CD4-positive, alpha-beta T cell (primary cell): ENCODE measurements at regions of chr19 and their contacts with region 1.

Region 1: DNA sequence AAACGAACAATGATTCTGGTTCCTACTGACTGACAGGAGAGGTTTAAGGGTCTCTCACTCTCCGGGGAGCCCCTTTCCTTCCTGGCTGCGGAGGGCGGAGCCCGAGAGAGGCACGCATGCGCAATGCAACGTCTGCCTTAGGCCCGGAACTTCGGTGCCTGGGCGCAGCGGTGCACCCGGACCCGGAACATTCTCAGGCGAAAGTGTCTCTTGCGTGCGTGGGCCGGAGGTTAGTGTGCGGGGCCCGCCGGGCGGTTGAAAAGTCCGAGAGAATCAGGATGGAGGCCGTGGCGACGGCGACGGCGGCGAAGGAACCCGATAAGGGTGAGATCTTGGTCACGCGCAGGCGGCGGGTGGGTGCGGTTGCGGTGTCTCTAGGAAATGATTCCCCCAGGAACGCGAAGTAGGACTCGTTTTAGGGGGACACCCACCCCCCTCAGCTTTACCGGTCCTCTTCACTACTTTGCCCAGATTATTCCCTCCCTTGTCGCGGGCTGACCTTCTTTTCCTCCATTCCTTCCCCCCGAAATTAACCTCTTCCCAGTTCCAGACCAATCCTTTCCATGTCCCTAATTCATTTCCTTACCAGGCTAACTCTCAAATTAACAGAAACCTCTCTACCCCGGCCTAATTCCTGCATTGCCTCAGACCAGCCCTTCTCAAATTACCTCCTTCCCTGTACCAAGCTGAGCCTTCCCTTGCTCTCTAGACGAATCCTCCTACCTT is at the start of gene CCDC97:
- DNase-seq: peak; percentile 80 to 94 (median 88)
- ATAC-seq: peak; percentile 55
- H3K4me3 ChIP-seq: peak within 1 kb of the TSS; percentile 64
- H3K4me3 Mint-ChIP-seq: peak within 1 kb of the TSS; percentile 95
- H3K27ac ChIP-seq: peak within 1 kb of the TSS; percentile 95 to 97
- H3K27ac Mint-ChIP-seq: peak within 1 kb of the TSS; percentile 97
- H3K4me1 ChIP-seq: peaks cover 80% of the 10 kb centered on the region
- H3K4me1 Mint-ChIP-seq: peaks cover 80% of the 10 kb centered on the region
- H3K27me3 ChIP-seq: no peaks in the 10 kb centered on the region
- H3K27me3 Mint-ChIP-seq: no peaks in the 10 kb centered on the region
- CTCF ChIP-seq: no peak
- total RNA-seq, gene CCDC97: 27.3 to 29.7 TPM

Region 2: DNA sequence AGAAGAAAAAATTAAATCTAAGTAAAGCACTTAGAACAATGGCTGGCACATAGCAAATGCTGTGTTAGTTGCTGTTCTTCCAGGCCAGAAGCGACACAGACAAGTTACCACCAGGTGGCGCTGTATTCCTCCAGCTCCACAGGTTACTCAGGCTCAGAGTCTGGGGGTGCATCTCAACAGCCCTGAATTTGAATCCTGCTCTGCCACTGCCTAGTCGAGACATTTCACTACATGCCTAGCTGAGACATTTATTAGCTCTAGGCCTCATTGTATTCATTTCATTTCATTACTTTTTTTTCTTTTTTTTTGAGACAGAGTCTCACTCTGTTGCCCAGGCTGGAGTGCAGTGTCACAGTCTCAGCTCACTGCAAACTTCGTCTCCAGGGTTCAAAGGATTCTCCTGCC is 335.6 kb before region 1 on chr19:
- CTCF ChIA-PET with region 1: no interaction called
- POLR2A ChIA-PET with region 1: no interaction called
- intact Hi-C with region 1: loop called (anchors 1 to 10 kb)
- DNase-seq: peak; percentile 68 to 92 (median 76)
- ATAC-seq: peak; percentile 78
- H3K4me3 ChIP-seq: no peak overlapping the region
- H3K4me3 Mint-ChIP-seq: no peak overlapping the region
- H3K27ac ChIP-seq: no peak overlapping the region
- H3K27ac Mint-ChIP-seq: no peak overlapping the region
- H3K4me1 ChIP-seq: peaks cover 20% of the 10 kb centered on the region
- H3K4me1 Mint-ChIP-seq: peaks cover 32% of the 10 kb centered on the region
- H3K27me3 ChIP-seq: peaks cover 0 to 2% of the 10 kb centered on the region in 2 experiments
- H3K27me3 Mint-ChIP-seq: peaks cover 21% of the 10 kb centered on the region
- CTCF ChIP-seq: peak; percentile 99

Region 3: GRCh38 chr19:41144403-41144802 is 165.8 kb before region 1 on chr19:
- CTCF ChIA-PET with region 1: no interaction called
- POLR2A ChIA-PET with region 1: no interaction called
- intact Hi-C with region 1: loop called (anchors 5 kb)
- DNase-seq: peak; percentile 80 to 95 (median 86)
- ATAC-seq: peak; percentile 97
- H3K4me3 ChIP-seq: no peak overlapping the region
- H3K4me3 Mint-ChIP-seq: no peak overlapping the region
- H3K27ac ChIP-seq: no peak overlapping the region
- H3K27ac Mint-ChIP-seq: no peak overlapping the region
- H3K4me1 ChIP-seq: no peaks in the 10 kb centered on the region
- H3K4me1 Mint-ChIP-seq: peaks cover 4% of the 10 kb centered on the region
- H3K27me3 ChIP-seq: no peaks in the 10 kb centered on the region
- H3K27me3 Mint-ChIP-seq: peaks cover 24% of the 10 kb centered on the region
- CTCF ChIP-seq: peak; percentile 84

Region 4: DNA sequence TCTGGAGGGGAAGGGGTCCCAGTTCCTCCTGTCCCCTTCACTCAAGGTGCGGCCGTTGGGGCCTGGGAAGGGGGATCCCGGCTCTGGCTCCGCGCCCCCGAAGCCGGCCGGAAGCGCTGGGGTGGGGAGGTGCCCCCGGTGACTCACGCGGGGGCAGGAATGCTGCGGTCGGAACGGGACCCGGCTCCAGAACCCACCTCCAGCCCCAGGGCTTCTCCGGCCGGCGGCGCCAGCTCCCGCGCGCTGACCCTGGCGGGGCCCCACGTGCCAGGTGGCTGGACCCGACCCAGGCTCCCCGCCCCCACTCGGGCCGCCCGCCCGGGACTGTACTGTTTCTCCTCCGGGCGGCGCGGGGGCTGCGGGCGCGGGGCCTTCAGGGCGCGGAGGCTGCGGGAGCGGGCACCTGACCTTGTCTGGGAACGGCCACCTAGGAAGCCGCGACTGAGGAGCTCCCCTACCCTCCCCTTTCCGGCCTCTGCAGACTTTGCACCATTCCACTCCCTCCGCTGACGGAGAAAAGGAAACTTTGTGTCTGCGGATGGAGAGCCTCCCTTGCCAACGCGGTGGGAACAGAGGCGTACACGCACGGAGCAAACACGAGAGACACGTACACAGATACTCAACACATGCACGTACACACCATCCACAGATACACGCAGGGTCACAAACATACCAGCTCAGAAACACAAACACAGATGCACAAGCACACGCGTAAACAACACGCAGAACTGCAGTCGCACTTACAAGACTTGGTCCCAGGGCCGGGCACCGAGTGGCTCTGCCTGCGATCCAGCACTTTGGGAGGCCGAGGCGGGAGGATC is 83.9 kb before region 1 on chr19:
- CTCF ChIA-PET with region 1: no interaction called
- POLR2A ChIA-PET with region 1: no interaction called
- intact Hi-C with region 1: no loop called
- DNase-seq: peak in 13 of 14 experiments; percentile 8 to 71 (median 38)
- ATAC-seq: peak; percentile 74
- H3K4me3 ChIP-seq: peak overlapping the region; percentile 60
- H3K4me3 Mint-ChIP-seq: peak overlapping the region; percentile 86
- H3K27ac ChIP-seq: no peak overlapping the region
- H3K27ac Mint-ChIP-seq: peak overlapping the region; percentile 85
- H3K4me1 ChIP-seq: peaks cover 16% of the 10 kb centered on the region
- H3K4me1 Mint-ChIP-seq: peaks cover 18% of the 10 kb centered on the region
- H3K27me3 ChIP-seq: peaks cover 0 to 2% of the 10 kb centered on the region in 2 experiments
- H3K27me3 Mint-ChIP-seq: peaks cover 8% of the 10 kb centered on the region
- CTCF ChIP-seq: peak; percentile 7

Region 5: DNA sequence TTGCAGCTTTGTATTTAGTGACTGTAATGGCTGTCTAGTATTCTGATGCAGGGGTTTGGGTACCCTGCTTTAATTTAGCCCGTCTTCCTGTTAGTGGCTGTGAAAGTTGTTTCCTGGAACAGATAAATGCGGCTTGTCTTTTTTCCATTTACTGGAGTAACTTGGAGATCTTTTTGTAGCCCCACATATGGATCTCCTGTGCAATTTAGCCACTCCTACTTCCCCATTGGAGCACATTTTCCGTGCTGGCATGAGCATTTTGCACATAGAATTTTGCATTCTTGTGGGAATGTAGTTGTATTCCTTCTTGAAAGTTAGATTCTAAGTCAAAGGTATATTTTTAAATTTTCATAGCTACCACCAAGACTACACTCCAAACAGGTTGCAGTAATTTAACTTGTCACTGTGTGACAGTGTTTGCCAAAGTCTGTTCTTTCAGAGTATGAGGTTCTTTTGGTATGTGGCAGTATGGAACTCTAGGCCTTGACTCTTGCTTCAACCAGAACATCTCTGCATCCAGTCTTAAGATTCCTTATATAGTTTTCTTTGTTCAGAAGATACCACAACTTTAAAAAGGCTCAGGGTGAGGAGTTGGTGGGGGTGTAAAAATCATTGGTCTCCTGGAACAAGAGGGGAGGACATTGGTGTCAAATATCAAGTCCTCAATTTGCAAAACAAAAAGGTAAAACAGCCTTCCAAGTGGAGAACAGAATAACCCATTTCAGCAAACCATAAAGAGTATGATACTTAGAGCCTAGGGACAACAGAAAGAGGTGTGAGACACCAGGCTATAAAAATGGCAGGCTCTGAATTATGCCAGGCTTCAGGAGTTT is 21.3 kb before region 1 on chr19:
- CTCF ChIA-PET with region 1: interaction called, 4 read pairs
- POLR2A ChIA-PET with region 1: interaction called, 7 read pairs
- intact Hi-C with region 1: loop called in 1 of 2 experiments (anchors 2 kb)
- DNase-seq: peak in 1 of 14 experiments; percentile 33
- ATAC-seq: peak; percentile 38
- H3K4me3 ChIP-seq: no peak overlapping the region
- H3K4me3 Mint-ChIP-seq: no peak overlapping the region
- H3K27ac ChIP-seq: no peak overlapping the region
- H3K27ac Mint-ChIP-seq: no peak overlapping the region
- H3K4me1 ChIP-seq: peaks cover 2% of the 10 kb centered on the region
- H3K4me1 Mint-ChIP-seq: peaks cover 11% of the 10 kb centered on the region
- H3K27me3 ChIP-seq: no peaks in the 10 kb centered on the region
- H3K27me3 Mint-ChIP-seq: no peaks in the 10 kb centered on the region
- CTCF ChIP-seq: no peak

Region 6: GRCh38 chr19:41327576-41328156 is 17.5 kb after region 1 on chr19:
- CTCF ChIA-PET with region 1: interaction called, 9 read pairs
- POLR2A ChIA-PET with region 1: interaction called, 20 read pairs
- intact Hi-C with region 1: loop called (anchors 2 kb)
- DNase-seq: peak; percentile 47 to 97 (median 76)
- ATAC-seq: peak; percentile 65
- H3K4me3 ChIP-seq: peak overlapping the region; percentile 44
- H3K4me3 Mint-ChIP-seq: peak overlapping the region; percentile 82
- H3K27ac ChIP-seq: peak overlapping the region; percentile 74 to 89
- H3K27ac Mint-ChIP-seq: peak overlapping the region; percentile 97
- H3K4me1 ChIP-seq: peaks cover 99% of the 10 kb centered on the region
- H3K4me1 Mint-ChIP-seq: peaks cover 75% of the 10 kb centered on the region
- H3K27me3 ChIP-seq: no peaks in the 10 kb centered on the region
- H3K27me3 Mint-ChIP-seq: no peaks in the 10 kb centered on the region
- CTCF ChIP-seq: no peak

Region 7: DNA sequence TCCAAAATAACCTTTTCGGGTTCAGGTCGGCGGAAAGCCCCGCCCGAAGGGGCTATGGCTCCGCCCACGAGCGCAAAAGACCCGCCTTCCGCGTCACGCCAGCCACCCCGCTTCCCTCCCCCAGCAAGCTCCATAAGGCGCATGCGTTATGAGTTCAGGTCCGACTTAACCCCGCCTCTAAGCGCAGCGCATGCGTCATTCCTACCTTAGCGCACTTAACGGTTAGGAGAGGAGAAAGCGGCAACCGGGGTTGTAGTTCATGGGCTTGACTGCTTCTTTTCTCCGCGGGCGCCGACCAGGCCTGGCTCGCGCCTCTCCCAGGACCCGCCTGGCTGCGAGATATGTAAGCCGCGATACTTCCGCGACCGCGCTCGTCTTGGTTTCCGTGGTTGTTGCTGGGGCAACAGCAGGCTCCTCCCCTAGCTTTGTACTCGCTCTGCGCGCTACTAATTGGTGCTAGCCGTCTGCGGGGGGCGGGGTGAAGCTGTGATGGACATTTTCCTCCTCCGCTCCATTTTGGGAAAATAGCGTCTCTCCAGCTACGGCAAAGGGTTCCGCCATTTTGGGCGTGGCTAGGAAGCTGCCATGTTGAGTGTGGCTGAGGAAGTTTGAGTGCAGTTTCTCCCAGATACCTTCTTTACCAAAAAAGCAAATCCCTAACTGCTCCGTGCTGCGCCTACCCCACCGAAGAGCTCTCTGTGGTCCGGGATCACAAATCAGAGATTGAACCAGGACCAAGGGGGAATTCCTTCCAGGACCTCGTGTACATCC is 53.7 kb after region 1 on chr19 and contains the start of gene B9D2:
- CTCF ChIA-PET with region 1: no interaction called
- POLR2A ChIA-PET with region 1: interaction called, 17 read pairs
- intact Hi-C with region 1: no loop called
- DNase-seq: peak; percentile 97 to 99 (median 98)
- ATAC-seq: peak; percentile 92
- H3K4me3 ChIP-seq: peak within 1 kb of the TSS; percentile 66
- H3K4me3 Mint-ChIP-seq: peak within 1 kb of the TSS; percentile 94
- H3K27ac ChIP-seq: peak within 1 kb of the TSS; percentile 98 to 99
- H3K27ac Mint-ChIP-seq: peak within 1 kb of the TSS; percentile 98
- H3K4me1 ChIP-seq: peaks cover 35% of the 10 kb centered on the region
- H3K4me1 Mint-ChIP-seq: peaks cover 39% of the 10 kb centered on the region
- H3K27me3 ChIP-seq: no peaks in the 10 kb centered on the region
- H3K27me3 Mint-ChIP-seq: no peaks in the 10 kb centered on the region
- CTCF ChIP-seq: no peak
- total RNA-seq, gene B9D2: 21.1 to 26.8 TPM

Region 8: DNA sequence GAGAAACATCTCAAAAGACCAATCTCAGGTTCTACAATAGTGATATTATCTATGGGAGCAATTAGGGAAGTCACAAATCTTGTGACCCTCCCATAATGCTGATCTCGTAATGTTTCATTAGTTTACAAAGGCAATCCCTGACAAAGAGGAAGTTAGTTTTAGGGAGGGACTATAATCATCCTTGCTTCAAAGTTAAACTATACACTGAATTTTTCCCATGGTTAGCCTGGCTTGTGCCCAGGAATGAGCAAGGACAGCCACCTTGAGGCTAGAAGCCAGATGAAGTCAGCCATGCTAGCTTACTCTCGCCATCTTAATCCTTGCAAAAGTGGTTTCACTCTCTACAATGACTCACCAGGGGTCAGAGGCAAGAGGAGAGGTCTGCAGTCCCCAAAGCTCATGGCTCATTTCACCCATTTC is 491.6 kb after region 1 on chr19:
- CTCF ChIA-PET with region 1: no interaction called
- POLR2A ChIA-PET with region 1: no interaction called
- intact Hi-C with region 1: no loop called
- DNase-seq: peak in 2 of 14 experiments; percentile 36 to 43
- ATAC-seq: no peak
- H3K4me3 ChIP-seq: no peak overlapping the region
- H3K4me3 Mint-ChIP-seq: no peak overlapping the region
- H3K27ac ChIP-seq: no peak overlapping the region
- H3K27ac Mint-ChIP-seq: no peak overlapping the region
- H3K4me1 ChIP-seq: no peaks in the 10 kb centered on the region
- H3K4me1 Mint-ChIP-seq: peaks cover 16% of the 10 kb centered on the region
- H3K27me3 ChIP-seq: peaks cover 0 to 2% of the 10 kb centered on the region in 2 experiments
- H3K27me3 Mint-ChIP-seq: no peaks in the 10 kb centered on the region
- CTCF ChIP-seq: no peak